Head of caudate nucleus (tissue), 42 donors: ENCODE measurements at regions of chr11 and their contacts with region 1.

Region 1: DNA sequence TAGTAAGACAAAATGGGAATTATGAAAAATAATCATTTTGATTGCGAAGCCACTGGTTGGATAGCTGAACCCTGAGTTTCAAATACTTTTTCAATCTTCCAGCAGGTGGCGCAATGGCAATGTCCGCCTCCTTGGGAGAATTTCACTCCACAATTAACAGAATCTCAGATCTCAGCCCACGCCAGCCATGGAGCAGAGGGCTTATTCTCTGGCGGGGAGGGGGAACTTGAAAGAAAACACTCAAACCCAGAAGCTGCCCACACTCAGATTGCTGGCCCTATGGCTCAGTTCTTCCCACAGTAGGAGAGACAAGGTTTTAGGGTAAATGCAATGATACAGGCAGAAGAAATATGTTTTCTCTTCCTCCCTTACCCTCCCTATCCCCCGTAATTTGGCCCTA is 38.7 kb upstream of the RCN1 start:
- DNase-seq: peak; percentile 42 to 91 (median 73)

Region 2: GRCh38 chr11:32118025-32118974 is 66.1 kb after region 1 on chr11:
- intact Hi-C with region 1: no loop called
- DNase-seq: peak in 24 of 42 donors; percentile 9 to 73 (median 35)

Region 3: GRCh38 chr11:32176223-32176934 is 124.2 kb after region 1 on chr11:
- intact Hi-C with region 1: loop called (anchors 5 kb)
- DNase-seq: peak; percentile 51 to 95 (median 86)

Region 4: DNA sequence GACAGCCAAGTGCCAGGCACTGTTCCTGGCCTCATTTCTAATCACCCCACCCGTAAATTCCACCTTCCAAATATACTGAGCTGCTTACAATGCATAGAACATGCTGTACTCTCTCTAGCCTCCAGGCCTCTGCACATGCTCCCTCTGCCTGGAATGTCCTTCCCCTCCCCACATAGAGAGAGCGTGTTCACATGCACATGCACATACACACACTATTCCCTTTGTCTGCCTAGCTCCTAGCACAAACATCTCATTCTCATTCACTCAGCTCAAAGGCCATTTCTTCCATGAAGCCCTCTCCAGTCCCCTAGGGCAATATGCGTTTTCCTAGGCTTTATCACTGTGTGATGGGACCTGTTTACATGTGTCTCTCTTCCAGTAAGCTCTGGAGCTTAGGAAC is 238.6 kb after region 1 on chr11:
- intact Hi-C with region 1: no loop called
- DNase-seq: peak in 40 of 42 donors; percentile 4 to 84 (median 56)

Region 5: GRCh38 chr11:32309541-32310198 is 257.5 kb after region 1 on chr11:
- intact Hi-C with region 1: loop called (anchors 10 kb)
- DNase-seq: no peak